Endothelial cell of umbilical vein (primary cell): ENCODE measurements at regions of chr21 and their contacts with region 1.

Region 1: DNA sequence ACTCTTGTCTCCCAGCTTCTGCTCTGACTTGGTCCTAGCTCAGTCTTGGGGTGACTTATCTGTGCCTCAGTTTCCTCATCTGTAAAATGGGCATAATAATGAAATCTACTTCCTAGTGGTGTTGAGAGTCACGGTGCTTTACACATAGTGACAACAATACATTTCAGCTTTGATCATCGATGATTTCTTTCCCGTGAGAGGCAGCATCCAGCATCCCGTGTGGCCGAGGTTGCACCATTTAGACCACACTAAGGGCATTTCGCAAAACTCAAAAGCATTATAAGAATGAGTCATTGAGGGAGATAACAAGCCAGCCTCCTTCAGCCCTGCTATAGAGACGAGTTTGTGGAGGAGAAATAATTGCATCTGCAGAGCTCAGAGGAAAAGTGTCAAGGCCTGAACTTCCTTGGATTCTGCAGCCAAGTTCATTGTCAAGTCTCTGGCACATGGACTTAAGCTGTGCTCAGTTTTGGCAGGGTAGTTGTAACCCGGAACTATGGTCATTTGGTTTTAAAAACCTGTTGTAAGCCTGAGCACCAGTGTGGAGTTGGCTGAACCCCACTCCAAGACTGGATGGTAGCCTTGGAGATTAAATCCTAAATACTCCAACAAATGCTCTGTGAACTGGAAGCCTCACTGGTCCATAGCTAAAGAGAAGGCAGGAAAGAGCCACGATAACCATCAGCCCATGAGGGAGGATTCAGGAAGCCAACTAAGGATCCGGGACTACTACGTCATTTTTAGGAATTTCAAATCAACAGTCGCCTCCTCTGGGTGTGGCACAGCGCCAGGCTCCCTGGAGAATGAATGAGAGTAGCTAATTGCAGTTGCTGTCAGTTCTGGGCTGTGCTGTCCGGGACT is 64.2 kb downstream of the TCP10L start:
- DNase-seq: peak; percentile 98
- H3K4me3 ChIP-seq: no peak overlapping the region
- H3K27ac ChIP-seq: peak overlapping the region; percentile 100
- H3K4me1 ChIP-seq: peaks cover 71% of the 10 kb centered on the region
- H3K27me3 ChIP-seq: no peaks in the 10 kb centered on the region
- CTCF ChIP-seq: no peak
- POLR2A ChIP-seq: peak; percentile 59

Region 2: GRCh38 chr21:32403201-32403777 is 117.8 kb before region 1 on chr21:
- CTCF ChIA-PET with region 1: interaction called, 23 read pairs
- POLR2A ChIA-PET with region 1: no interaction called
- dilution Hi-C with region 1: no loop called
- intact Hi-C with region 1: loop called (anchors 1 kb)
- DNase-seq: peak; percentile 86
- H3K4me3 ChIP-seq: no peak overlapping the region
- H3K27ac ChIP-seq: peak overlapping the region; percentile 22
- H3K4me1 ChIP-seq: peaks cover 16% of the 10 kb centered on the region
- H3K27me3 ChIP-seq: no peaks in the 10 kb centered on the region
- CTCF ChIP-seq: peak; percentile 63 to 66
- POLR2A ChIP-seq: no peak

Region 3: DNA sequence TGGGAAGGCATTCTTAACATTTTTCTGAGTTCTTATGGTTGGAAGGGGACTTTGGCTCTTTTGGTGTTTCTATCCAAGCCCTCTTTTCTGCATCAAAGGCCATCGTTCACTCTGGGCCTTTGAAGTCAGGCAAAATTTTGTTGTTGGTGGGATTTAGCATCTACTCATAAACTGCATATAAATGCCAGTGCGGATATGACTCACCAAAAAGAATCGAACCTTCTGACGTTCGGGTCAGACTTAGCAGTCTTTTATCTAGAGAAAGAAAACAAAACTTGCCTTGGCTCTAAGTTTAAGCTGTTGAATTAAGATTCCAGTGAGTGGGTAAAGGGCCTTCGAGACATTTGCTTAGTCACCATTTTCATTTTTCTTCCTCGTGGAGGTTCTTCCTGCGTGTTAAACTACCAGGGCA is 57.2 kb before region 1 on chr21:
- CTCF ChIA-PET with region 1: interaction called, 5 read pairs
- POLR2A ChIA-PET with region 1: no interaction called
- dilution Hi-C with region 1: no loop called
- intact Hi-C with region 1: loop called (anchors 1 kb)
- DNase-seq: peak; percentile 95
- H3K4me3 ChIP-seq: no peak overlapping the region
- H3K27ac ChIP-seq: peak overlapping the region; percentile 99
- H3K4me1 ChIP-seq: peaks cover 28% of the 10 kb centered on the region
- H3K27me3 ChIP-seq: no peaks in the 10 kb centered on the region
- CTCF ChIP-seq: no peak
- POLR2A ChIP-seq: peak; percentile 26

Region 4: DNA sequence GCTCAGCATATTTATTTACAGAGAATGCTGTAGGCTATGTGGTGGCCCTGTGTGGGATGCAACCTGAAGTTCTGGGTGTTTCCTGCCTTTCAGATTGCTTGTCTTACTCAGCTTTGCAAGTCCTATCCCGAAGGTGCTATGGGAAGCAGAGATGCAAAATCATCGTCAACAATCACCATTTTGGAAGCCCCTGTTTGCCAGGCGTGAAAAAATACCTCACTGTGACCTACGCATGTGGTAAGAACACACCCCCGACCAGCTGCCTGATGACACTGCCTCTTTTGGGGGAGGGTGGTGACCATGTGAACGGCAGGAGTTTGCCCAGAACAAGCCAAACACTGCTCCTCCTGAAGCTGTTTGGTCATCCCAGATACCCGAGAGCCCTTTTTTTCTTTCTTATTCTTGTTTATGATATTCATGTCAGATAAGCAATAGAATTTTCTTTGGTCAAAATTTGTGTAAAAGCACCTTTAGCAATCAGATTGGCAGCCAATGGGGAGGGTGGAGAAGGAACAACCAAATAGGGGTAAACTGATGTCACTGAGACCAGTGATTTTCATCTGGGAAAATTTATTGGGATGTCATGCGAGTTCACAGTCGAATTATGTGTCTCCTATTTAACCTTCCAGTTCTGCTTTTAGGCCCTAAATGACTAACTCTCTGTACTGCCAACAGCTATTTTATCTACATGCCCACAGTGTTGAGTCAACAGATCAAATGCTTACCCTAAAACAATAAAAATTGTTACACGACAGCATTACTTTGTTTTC is 26.0 kb before region 1 on chr21:
- CTCF ChIA-PET with region 1: interaction called, 8 read pairs
- POLR2A ChIA-PET with region 1: interaction called, 3 read pairs
- dilution Hi-C with region 1: no loop called
- intact Hi-C with region 1: loop called (anchors 1 kb)
- DNase-seq: peak; percentile 91
- H3K4me3 ChIP-seq: no peak overlapping the region
- H3K27ac ChIP-seq: peak overlapping the region; percentile 95
- H3K4me1 ChIP-seq: peaks cover 73% of the 10 kb centered on the region
- H3K27me3 ChIP-seq: no peaks in the 10 kb centered on the region
- CTCF ChIP-seq: no peak
- POLR2A ChIP-seq: peak; percentile 20

Region 5: GRCh38 chr21:32507342-32507919 is 13.7 kb before region 1 on chr21:
- CTCF ChIA-PET with region 1: no interaction called
- POLR2A ChIA-PET with region 1: no interaction called
- dilution Hi-C with region 1: no loop called
- intact Hi-C with region 1: no loop called
- DNase-seq: no peak
- H3K4me3 ChIP-seq: no peak overlapping the region
- H3K27ac ChIP-seq: no peak overlapping the region
- H3K4me1 ChIP-seq: no peaks in the 10 kb centered on the region
- H3K27me3 ChIP-seq: no peaks in the 10 kb centered on the region
- CTCF ChIP-seq: no peak
- POLR2A ChIP-seq: no peak

Region 6: DNA sequence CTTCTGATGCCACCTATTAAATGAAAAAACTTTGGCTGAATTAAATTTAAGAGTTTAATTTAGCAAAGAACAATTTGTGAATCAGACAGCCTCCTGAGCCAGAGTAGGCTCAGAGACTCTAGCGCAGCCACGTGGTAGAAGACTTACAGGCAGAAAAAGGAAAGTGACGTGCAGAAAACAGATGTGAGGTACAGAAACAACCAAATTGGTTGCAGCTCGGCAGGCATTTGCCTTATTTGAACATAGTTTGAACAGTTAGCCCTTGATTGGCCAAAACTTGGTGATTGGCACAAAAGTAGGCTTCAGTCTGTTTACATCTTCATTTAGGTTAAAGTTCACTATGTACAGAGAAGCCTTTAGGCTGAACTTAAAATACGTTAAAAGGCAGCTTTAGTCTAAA is 41.3 kb after region 1 on chr21:
- CTCF ChIA-PET with region 1: interaction called, 27 read pairs
- POLR2A ChIA-PET with region 1: interaction called, 3 read pairs
- dilution Hi-C with region 1: no loop called
- intact Hi-C with region 1: loop called (anchors 1 kb)
- DNase-seq: peak; percentile 84
- H3K4me3 ChIP-seq: no peak overlapping the region
- H3K27ac ChIP-seq: peak overlapping the region; percentile 22
- H3K4me1 ChIP-seq: peaks cover 6% of the 10 kb centered on the region
- H3K27me3 ChIP-seq: no peaks in the 10 kb centered on the region
- CTCF ChIP-seq: peak; percentile 48 to 61
- POLR2A ChIP-seq: no peak

Region 7: DNA sequence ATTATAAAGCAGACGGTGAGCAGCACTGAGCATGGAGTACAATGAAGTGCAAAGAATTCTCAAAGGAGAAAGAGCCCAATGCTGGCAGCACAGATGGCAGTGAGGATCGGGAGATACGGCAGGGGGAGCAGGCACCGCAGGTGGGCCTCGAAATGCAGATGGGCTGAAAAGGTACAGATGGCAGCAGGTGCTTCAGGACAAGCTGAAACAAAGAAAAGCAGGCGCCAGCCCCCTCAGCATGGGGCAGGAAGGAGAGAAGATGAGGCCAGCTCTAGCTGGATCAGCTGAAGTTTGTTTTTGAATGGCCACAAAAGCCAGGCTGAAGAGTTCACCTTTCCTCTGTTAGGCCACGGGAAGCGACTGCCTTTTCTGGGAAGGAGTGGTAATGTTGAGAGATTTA is 83.4 kb after region 1 on chr21:
- CTCF ChIA-PET with region 1: interaction called, 13 read pairs
- POLR2A ChIA-PET with region 1: interaction called, 7 read pairs
- dilution Hi-C with region 1: no loop called
- intact Hi-C with region 1: loop called (anchors 2 kb)
- DNase-seq: no peak
- H3K4me3 ChIP-seq: no peak overlapping the region
- H3K27ac ChIP-seq: no peak overlapping the region
- H3K4me1 ChIP-seq: no peaks in the 10 kb centered on the region
- H3K27me3 ChIP-seq: no peaks in the 10 kb centered on the region
- CTCF ChIP-seq: no peak
- POLR2A ChIP-seq: no peak

Region 8: DNA sequence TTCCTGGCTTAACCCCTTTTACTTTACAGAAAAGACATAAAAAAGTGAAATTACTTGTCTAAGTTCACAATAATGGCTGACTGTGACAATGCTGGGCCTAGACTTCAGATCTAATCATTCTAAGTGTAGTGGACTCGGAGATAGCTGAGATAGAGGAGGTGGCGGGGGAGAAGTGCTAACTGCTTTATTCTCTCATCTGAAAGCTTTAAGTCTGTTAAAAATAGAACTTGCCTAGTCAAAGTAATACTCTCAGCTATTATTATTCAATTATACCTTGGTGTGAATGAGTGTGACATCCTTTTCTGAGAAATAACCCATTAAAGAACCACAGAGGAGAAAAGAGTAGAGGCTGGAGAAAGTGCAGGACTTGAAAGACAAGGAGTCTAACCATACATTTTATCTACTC is 408.5 kb after region 1 on chr21:
- CTCF ChIA-PET with region 1: no interaction called
- POLR2A ChIA-PET with region 1: no interaction called
- dilution Hi-C with region 1: no loop called
- intact Hi-C with region 1: no loop called
- DNase-seq: no peak
- H3K4me3 ChIP-seq: no peak overlapping the region
- H3K27ac ChIP-seq: no peak overlapping the region
- H3K4me1 ChIP-seq: no peaks in the 10 kb centered on the region
- H3K27me3 ChIP-seq: no peaks in the 10 kb centered on the region
- CTCF ChIP-seq: no peak
- POLR2A ChIP-seq: no peak

Region 9: DNA sequence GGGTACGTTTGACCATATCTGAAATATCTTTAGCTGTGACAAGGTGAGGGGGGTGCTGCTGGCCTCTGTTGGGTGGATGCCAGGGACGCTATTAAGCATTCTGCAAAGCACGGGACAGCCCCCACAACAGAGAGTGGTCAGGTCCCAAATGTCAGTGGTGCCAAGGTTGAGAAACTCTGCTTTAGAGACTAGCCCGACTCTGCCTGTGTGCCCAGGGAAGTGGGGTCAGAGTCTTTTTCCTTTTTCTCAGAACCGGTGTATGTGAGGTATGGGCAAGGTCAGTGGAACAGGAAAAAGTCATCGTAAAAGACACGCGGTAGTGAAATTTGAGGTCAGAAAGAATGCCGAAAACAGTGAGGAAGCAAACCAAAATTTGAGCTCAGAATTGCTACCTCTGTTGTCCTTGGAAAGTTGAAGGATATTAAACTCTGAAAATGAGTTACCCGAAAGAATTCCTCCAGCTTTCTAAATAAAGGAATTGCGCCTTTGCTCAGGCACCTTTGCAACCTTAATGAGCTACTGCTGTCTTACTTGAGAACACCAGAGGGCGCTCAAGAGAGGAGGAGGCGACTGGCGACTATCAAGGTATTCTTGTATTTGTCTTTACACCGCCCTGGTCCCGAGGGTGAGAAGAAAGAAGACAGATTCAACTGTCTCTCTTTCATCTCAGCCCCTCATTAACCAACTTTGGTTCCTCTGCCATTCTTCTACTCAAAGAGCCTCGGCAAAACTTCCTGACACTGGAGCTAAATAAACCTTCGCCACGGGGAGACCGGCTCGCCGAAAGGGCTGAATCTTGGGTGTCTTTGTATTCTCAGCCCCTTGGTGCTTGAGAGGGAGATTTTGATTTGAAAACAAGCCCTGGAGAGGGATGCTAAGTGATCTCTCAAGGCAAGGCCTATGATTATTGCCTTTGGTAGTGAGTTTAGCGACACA is 419.2 kb after region 1 on chr21:
- CTCF ChIA-PET with region 1: no interaction called
- POLR2A ChIA-PET with region 1: no interaction called
- dilution Hi-C with region 1: no loop called
- intact Hi-C with region 1: no loop called
- DNase-seq: peak; percentile 40
- H3K4me3 ChIP-seq: no peak overlapping the region
- H3K27ac ChIP-seq: no peak overlapping the region
- H3K4me1 ChIP-seq: no peaks in the 10 kb centered on the region
- H3K27me3 ChIP-seq: peaks cover 4 to 5% of the 10 kb centered on the region in 2 experiments
- CTCF ChIP-seq: peak; percentile 69 to 75
- POLR2A ChIP-seq: no peak